WTC11 (cell line): ENCODE measurements at regions of chr17 and their contacts with region 1.

Region 1: GRCh38 chr17:62109378-62109902 is 44.4 kb upstream of the MED13 start:
- DNase-seq: peak; percentile 85
- ATAC-seq: peak; percentile 98
- H3K4me3 Mint-ChIP-seq: no peak overlapping the region
- H3K27ac Mint-ChIP-seq: no peak overlapping the region
- H3K4me1 Mint-ChIP-seq: peaks cover 9% of the 10 kb centered on the region
- H3K27me3 Mint-ChIP-seq: no peaks in the 10 kb centered on the region
- CTCF ChIP-seq: peak; percentile 51; the same call in 1 of the 2 replicates

Region 2: DNA sequence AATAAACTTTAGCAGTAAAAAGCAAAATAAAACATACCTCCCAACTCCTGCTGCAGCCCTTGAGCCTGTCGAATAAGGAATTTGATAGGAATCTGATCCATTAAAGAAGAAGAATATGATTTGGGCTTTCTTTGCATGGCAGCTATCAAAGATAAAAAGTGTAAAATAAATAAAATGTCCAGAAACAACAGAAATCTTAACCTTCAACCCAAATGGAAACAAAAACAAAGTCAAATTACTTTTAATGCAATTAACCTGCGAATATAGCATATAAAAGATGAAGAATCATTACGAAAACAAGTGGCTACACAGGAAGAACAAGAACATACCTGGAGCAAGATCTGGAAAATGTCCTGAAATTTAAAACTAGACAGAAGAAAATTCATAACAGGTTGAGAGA is 224.6 kb before region 1 on chr17:
- CTCF ChIA-PET with region 1: interaction called, 10 read pairs
- POLR2A ChIA-PET with region 1: no interaction called
- DNase-seq: no peak
- ATAC-seq: no peak
- H3K4me3 Mint-ChIP-seq: no peak overlapping the region
- H3K27ac Mint-ChIP-seq: no peak overlapping the region
- H3K4me1 Mint-ChIP-seq: no peaks in the 10 kb centered on the region
- H3K27me3 Mint-ChIP-seq: no peaks in the 10 kb centered on the region
- CTCF ChIP-seq: no peak

Region 3: GRCh38 chr17:62008294-62008693 is 101.1 kb before region 1 on chr17:
- CTCF ChIA-PET with region 1: interaction called, 10 read pairs
- POLR2A ChIA-PET with region 1: no interaction called
- DNase-seq: no peak
- ATAC-seq: no peak
- H3K4me3 Mint-ChIP-seq: no peak overlapping the region
- H3K27ac Mint-ChIP-seq: no peak overlapping the region
- H3K4me1 Mint-ChIP-seq: no peaks in the 10 kb centered on the region
- H3K27me3 Mint-ChIP-seq: no peaks in the 10 kb centered on the region
- CTCF ChIP-seq: no peak

Region 4: GRCh38 chr17:62052757-62053338 is 56.6 kb before region 1 on chr17:
- CTCF ChIA-PET with region 1: interaction called, 20 read pairs
- POLR2A ChIA-PET with region 1: no interaction called
- DNase-seq: no peak
- ATAC-seq: no peak
- H3K4me3 Mint-ChIP-seq: no peak overlapping the region
- H3K27ac Mint-ChIP-seq: no peak overlapping the region
- H3K4me1 Mint-ChIP-seq: peaks cover 8% of the 10 kb centered on the region
- H3K27me3 Mint-ChIP-seq: no peaks in the 10 kb centered on the region
- CTCF ChIP-seq: no peak

Region 5: GRCh38 chr17:62075308-62075815 is 34.1 kb before region 1 on chr17:
- CTCF ChIA-PET with region 1: interaction called, 19 read pairs
- POLR2A ChIA-PET with region 1: no interaction called
- DNase-seq: no peak
- ATAC-seq: no peak
- H3K4me3 Mint-ChIP-seq: no peak overlapping the region
- H3K27ac Mint-ChIP-seq: no peak overlapping the region
- H3K4me1 Mint-ChIP-seq: peaks cover 3% of the 10 kb centered on the region; the same call in 1 of the 2 replicates
- H3K27me3 Mint-ChIP-seq: no peaks in the 10 kb centered on the region
- CTCF ChIP-seq: no peak

Region 6: GRCh38 chr17:62121025-62121730 is 11.7 kb after region 1 on chr17:
- CTCF ChIA-PET with region 1: interaction called, 12 read pairs
- POLR2A ChIA-PET with region 1: no interaction called
- DNase-seq: no peak
- ATAC-seq: no peak
- H3K4me3 Mint-ChIP-seq: no peak overlapping the region
- H3K27ac Mint-ChIP-seq: no peak overlapping the region
- H3K4me1 Mint-ChIP-seq: peaks cover 4% of the 10 kb centered on the region
- H3K27me3 Mint-ChIP-seq: no peaks in the 10 kb centered on the region
- CTCF ChIP-seq: no peak